Testis (tissue), 5 donors: ENCODE measurements at regions of chr11 and their contacts with region 1.

Region 1: DNA sequence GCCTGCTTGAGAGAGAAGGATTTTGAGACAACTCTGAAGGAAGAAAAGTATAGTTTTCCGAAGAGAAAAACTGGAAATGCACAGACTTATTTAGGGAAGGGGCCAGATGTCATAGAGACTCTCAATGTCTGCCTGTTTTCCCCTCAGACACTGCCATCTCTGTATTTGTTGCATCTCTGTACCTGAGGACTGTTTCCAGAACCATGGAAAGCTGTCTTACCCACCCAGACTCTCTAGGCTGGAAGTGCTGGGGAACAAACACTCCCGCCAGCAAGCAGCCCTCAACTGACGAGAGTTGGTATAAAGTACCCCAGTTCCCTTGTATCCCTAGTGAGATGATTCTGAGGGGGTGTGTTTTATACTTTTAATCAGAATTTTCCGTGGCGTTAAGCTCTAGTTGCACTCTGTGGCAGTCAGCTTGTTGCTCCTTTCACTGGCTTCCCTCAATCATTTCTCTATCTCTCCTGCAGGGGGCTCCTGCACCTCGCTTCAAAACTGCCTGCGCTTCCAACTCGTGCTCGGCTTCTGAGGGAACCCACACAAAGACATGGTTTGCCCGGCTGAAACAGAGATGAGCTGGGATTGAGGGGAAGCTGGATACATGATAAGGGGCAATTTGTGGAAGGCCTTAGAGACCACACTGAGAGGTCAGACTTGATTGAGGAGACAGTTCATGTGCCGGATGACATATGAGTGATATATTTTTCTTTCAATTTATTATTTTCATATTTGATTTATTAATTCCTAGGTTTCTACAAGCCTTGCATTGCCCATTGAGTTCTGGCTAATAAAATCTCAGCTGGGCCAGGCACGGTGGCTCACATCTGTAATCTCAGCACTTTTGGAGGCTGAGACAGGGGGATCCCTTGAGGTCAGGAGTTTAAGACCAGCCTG is 36.9 kb upstream of the CLPB start:
- DNase-seq: peak; percentile 80
- H3K4me3 ChIP-seq: no peak overlapping the region
- H3K27ac ChIP-seq: no peak overlapping the region
- H3K4me1 ChIP-seq: no peaks in the 10 kb centered on the region
- H3K27me3 ChIP-seq: no peaks in the 10 kb centered on the region
- CTCF ChIP-seq: peak; percentile 53 to 75 (median 74)
- POLR2A ChIP-seq: no peak

Region 2: DNA sequence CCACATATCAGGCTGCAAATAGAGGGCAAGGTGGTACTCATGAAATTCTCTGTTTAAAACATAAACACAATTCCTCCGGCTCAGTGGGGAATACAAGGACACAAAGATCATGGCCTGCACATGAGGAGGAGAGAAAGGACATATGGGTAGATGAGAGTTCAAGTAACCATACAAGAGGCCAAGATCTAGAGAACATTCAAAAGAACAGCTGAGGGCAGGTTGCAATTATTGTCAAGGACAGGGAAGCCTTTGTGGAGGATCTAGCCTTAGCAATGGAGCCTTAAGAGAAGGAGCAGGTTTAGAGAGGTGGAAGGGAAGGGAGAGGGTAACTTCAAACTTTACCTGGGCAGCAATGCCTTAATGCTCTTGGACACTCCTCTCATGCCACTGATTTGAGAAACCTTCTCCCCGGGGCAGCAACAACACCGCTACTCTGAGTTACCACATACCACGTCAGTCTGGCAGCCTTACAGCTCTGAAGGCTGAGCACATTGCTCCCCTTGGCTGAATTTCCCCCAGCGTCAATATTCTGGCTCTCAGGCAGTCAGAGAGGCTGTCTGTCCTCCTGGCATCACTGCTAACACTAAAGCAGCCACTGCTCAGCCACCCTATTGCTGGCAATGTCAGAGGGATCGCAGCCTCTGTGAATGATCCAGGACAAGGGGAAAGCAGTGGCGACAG is 92.4 kb before region 1 on chr11:
- intact Hi-C with region 1: no loop called
- DNase-seq: peak; percentile 57
- H3K4me3 ChIP-seq: no peak overlapping the region
- H3K27ac ChIP-seq: no peak overlapping the region
- H3K4me1 ChIP-seq: no peaks in the 10 kb centered on the region
- H3K27me3 ChIP-seq: no peaks in the 10 kb centered on the region
- CTCF ChIP-seq: no peak
- POLR2A ChIP-seq: no peak

Region 3: GRCh38 chr11:72573072-72573854 is 102.0 kb after region 1 on chr11:
- intact Hi-C with region 1: loop called (anchors 10 kb)
- DNase-seq: peak; percentile 41
- H3K4me3 ChIP-seq: no peak overlapping the region
- H3K27ac ChIP-seq: no peak overlapping the region
- H3K4me1 ChIP-seq: no peaks in the 10 kb centered on the region
- H3K27me3 ChIP-seq: no peaks in the 10 kb centered on the region
- CTCF ChIP-seq: peak in 2 of 3 experiments; percentile 29 to 64
- POLR2A ChIP-seq: no peak

Region 4: DNA sequence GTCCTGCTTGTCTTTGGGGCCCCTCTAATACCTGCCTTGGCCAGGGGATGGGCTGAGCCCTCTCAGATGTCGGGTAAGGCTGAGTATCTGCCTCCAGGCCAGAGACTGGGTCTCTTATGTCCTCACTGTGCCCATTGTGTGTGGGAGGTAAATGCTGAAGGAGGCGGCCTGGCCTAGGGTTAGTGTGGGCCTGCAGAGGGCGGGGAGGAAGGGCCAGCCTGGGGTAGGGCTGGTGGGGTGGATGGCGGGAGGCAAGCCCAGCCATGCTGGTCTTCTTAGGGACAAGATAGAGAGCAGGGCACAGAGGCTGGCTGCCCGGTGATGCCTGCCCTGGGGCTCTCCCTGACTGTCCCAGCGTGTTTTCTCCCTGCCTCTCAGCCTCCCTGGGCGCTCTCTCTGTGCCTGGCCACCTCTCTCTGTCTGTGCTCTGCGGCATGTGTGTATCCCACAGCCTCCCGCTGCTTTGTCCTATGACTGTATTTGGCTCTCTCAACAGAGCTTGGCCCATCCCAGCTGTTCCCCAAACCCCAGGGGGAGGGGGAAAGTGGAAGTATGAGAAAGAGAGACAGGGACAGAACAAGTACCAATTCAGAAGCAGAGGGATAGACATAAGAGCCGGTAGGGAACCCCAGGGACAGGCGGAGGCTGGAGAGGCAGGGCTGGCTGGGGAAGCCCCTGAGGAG is 146.0 kb after region 1 on chr11:
- intact Hi-C with region 1: no loop called
- DNase-seq: peak; percentile 63
- H3K4me3 ChIP-seq: no peak overlapping the region
- H3K27ac ChIP-seq: peak overlapping the region; percentile 59 to 63
- H3K4me1 ChIP-seq: peaks cover 32% of the 10 kb centered on the region
- H3K27me3 ChIP-seq: no peaks in the 10 kb centered on the region
- CTCF ChIP-seq: no peak
- POLR2A ChIP-seq: no peak

Region 5: GRCh38 chr11:72652873-72653630 is 181.8 kb after region 1 on chr11:
- intact Hi-C with region 1: loop called (anchors 10 kb)
- DNase-seq: peak; percentile 17
- H3K4me3 ChIP-seq: no peak overlapping the region
- H3K27ac ChIP-seq: no peak overlapping the region
- H3K4me1 ChIP-seq: no peaks in the 10 kb centered on the region
- H3K27me3 ChIP-seq: no peaks in the 10 kb centered on the region
- CTCF ChIP-seq: no peak
- POLR2A ChIP-seq: no peak